T-cell (primary cell): ENCODE measurements at regions of chr5 and their contacts with region 1.

Region 1: GRCh38 chr5:156174225-156174624 is 152.7 kb upstream of the SGCD start:
- DNase-seq: no peak
- ATAC-seq: no peak
- H3K4me3 ChIP-seq: no peak overlapping the region
- H3K4me3 Mint-ChIP-seq: no peak overlapping the region
- H3K27ac ChIP-seq: no peak overlapping the region
- H3K27ac Mint-ChIP-seq: no peak overlapping the region
- H3K4me1 ChIP-seq: no peaks in the 10 kb centered on the region
- H3K4me1 Mint-ChIP-seq: no peaks in the 10 kb centered on the region
- H3K27me3 ChIP-seq: no peaks in the 10 kb centered on the region
- H3K27me3 Mint-ChIP-seq: peaks cover 3% of the 10 kb centered on the region in 2 donors

Region 2: GRCh38 chr5:156128026-156128425 is 46.2 kb before region 1 on chr5:
- CTCF ChIA-PET with region 1: interaction called in 1 of 2 experiments, 10 read pairs
- POLR2A ChIA-PET with region 1: no interaction called
- DNase-seq: no peak
- ATAC-seq: no peak
- H3K4me3 ChIP-seq: no peak overlapping the region
- H3K4me3 Mint-ChIP-seq: no peak overlapping the region
- H3K27ac ChIP-seq: no peak overlapping the region
- H3K27ac Mint-ChIP-seq: no peak overlapping the region
- H3K4me1 ChIP-seq: no peaks in the 10 kb centered on the region
- H3K4me1 Mint-ChIP-seq: no peaks in the 10 kb centered on the region
- H3K27me3 ChIP-seq: no peaks in the 10 kb centered on the region
- H3K27me3 Mint-ChIP-seq: no peaks in the 10 kb centered on the region